CD4-positive, alpha-beta memory T cell (primary cell): ENCODE measurements at regions of chr1 and their contacts with region 1.

Region 1: DNA sequence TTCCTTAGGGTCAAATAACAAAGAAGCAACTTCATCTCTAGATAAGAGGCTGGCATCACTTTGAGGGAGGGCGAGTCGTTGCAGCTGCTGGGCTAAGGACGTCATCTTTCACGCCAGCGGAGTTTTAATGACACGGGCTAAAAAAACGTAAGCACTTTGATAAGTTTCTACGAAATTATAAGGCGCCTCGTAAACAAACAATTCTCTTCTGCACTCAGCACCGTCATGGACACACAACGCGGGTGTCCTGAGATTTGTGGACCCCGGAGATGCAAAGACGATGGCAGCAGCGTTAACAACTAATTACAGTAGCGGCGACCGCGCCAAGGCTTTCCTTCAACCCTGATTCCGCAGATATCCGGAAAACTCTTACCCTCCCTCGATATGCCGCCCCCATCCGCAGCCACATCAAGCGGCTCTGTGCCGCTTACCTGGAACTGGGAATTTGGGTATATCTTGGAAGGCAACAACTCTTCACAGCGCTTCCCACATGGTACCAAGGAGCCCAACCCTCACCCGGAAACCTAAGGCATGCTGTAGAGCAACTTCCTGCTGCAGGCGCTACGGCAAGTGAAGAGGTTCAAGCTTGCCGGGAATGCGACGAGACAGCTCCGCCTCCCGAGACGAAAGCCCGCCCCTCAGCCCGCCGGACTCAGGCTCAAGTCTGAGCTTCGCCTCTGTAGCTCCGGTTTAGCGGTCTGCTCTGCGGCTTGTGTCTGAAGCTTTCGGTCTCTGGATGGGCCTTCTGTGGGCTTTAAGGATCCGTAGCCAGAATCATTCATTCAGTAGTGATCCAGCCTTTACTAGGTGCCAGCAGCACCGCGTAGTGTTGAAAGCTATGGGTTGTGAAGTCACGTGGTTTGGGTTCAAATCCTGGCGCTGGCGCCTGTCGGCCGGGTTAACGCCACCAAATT is at the start of gene HEATR1:
- DNase-seq: peak; percentile 80 to 87 (median 83)
- H3K4me3 ChIP-seq: peak within 1 kb of the TSS; percentile 86 to 99
- H3K4me3 Mint-ChIP-seq: peak within 1 kb of the TSS; percentile 90 to 99 (median 98)
- H3K27ac ChIP-seq: peak within 1 kb of the TSS; percentile 65
- H3K27ac Mint-ChIP-seq: peak within 1 kb of the TSS; percentile 92 to 98 (median 96)
- H3K4me1 ChIP-seq: peaks cover 15% of the 10 kb centered on the region
- H3K4me1 Mint-ChIP-seq: peaks cover 14 to 43% (median 27%) of the 10 kb centered on the region in 4 donors
- H3K27me3 ChIP-seq: peaks cover 4% of the 10 kb centered on the region
- H3K27me3 Mint-ChIP-seq: peaks cover 6 to 7% of the 10 kb centered on the region in 2 donors
- total RNA-seq, gene HEATR1: 44.0 to 57.5 TPM

Region 2: DNA sequence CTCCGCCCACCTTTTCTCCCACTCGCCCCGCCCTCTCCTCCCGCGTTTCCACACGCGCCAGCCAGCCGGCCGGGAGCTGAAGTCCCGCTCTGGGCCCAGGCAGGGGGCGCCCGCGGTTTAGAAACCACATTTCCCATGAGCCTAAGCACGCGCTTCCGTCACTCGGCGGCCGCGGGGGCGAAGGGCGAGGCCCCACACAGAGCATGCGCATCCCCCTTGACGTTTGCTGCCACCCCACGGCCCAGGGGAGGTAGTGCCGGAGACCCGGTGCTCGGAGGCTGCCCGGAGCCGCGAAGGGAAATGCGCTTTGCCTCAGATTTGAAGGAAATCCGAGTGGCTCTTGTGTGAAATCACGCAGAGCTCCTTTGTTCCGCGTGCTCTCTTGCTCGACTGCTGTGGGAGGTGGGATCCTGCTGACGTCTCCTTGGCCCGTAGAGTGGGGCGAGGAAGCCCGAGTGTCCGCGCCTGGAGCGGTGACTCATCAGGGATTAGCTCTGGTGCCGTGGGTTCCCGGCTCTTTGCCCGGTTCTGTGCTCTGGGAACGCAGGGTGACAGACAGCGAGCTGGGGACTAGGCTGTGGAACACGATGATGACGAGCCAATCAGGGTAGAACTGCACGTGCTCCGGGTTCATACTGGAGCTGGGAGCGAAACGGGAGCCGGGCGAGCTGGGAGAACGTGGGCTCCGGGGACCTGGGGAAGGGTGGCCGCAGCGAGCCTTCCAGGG is 1099.6 kb before region 1 on chr1:
- CTCF ChIA-PET with region 1: no interaction called
- POLR2A ChIA-PET with region 1: no interaction called
- intact Hi-C with region 1: loop called (anchors 1 kb)
- DNase-seq: peak; percentile 97 to 99 (median 98)
- H3K4me3 ChIP-seq: peak overlapping the region; percentile 74
- H3K4me3 Mint-ChIP-seq: peak overlapping the region; percentile 92 to 98 (median 96)
- H3K27ac ChIP-seq: peak overlapping the region; percentile 85
- H3K27ac Mint-ChIP-seq: peak overlapping the region; percentile 97 to 100 (median 98)
- H3K4me1 ChIP-seq: peaks cover 20% of the 10 kb centered on the region
- H3K4me1 Mint-ChIP-seq: peaks cover 12 to 32% (median 19%) of the 10 kb centered on the region in 4 donors
- H3K27me3 ChIP-seq: no peaks in the 10 kb centered on the region
- H3K27me3 Mint-ChIP-seq: peaks cover 0 to 1% of the 10 kb centered on the region in 2 donors

Region 3: DNA sequence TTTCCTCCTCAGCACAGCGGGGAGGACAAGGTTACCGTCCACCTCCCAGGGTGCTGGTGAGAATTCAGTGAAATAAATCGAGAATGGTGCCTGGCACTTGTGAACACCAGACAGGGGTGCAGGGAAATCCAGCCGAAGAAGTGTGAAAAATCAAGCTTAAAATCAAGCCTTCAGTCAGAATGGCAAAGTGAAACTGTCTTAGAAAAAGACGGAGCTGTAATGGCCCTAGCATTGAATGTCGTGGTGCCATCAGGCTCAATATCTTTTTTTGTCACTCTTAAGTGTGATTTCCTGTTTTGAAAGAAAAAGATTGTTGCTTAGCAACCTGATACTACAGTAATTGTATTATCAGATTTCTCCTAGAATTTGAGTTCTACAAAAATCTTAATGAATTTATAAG is 188.1 kb before region 1 on chr1:
- CTCF ChIA-PET with region 1: no interaction called
- POLR2A ChIA-PET with region 1: no interaction called
- intact Hi-C with region 1: loop called (anchors 10 kb)
- DNase-seq: peak; percentile 73 to 86 (median 82)
- H3K4me3 ChIP-seq: peak overlapping the region; percentile 45 to 49
- H3K4me3 Mint-ChIP-seq: peak overlapping the region; percentile 63 to 89 (median 80)
- H3K27ac ChIP-seq: peak overlapping the region; percentile 83
- H3K27ac Mint-ChIP-seq: peak overlapping the region; percentile 88 to 99 (median 97)
- H3K4me1 ChIP-seq: peaks cover 25% of the 10 kb centered on the region
- H3K4me1 Mint-ChIP-seq: peaks cover 18 to 27% (median 25%) of the 10 kb centered on the region in 4 donors
- H3K27me3 ChIP-seq: no peaks in the 10 kb centered on the region
- H3K27me3 Mint-ChIP-seq: no peaks in the 10 kb centered on the region

Region 4: GRCh38 chr1:236685917-236686814 is 81.9 kb after region 1 on chr1 and contains the start of gene ACTN2:
- CTCF ChIA-PET with region 1: no interaction called
- POLR2A ChIA-PET with region 1: no interaction called
- intact Hi-C with region 1: loop called (anchors 1 kb)
- DNase-seq: peak; percentile 28 to 43 (median 36)
- H3K4me3 ChIP-seq: peak within 1 kb of the TSS; percentile 11 to 38
- H3K4me3 Mint-ChIP-seq: peak within 1 kb of the TSS; percentile 71 to 88 (median 80)
- H3K27ac ChIP-seq: no peak within 1 kb of the TSS
- H3K27ac Mint-ChIP-seq: peak within 1 kb of the TSS in 6 of 7 donors; percentile 12 to 90 (median 42)
- H3K4me1 ChIP-seq: peaks cover 11% of the 10 kb centered on the region
- H3K4me1 Mint-ChIP-seq: peaks cover 13 to 23% (median 18%) of the 10 kb centered on the region in 4 donors
- H3K27me3 ChIP-seq: peaks cover 5% of the 10 kb centered on the region
- H3K27me3 Mint-ChIP-seq: peaks cover 11 to 16% of the 10 kb centered on the region in 2 donors
- total RNA-seq, gene ACTN2: not detected

Region 5: GRCh38 chr1:237341391-237341790 is 737.1 kb after region 1 on chr1:
- CTCF ChIA-PET with region 1: no interaction called
- POLR2A ChIA-PET with region 1: no interaction called
- intact Hi-C with region 1: no loop called
- DNase-seq: no peak
- H3K4me3 ChIP-seq: no peak overlapping the region
- H3K4me3 Mint-ChIP-seq: no peak overlapping the region
- H3K27ac ChIP-seq: no peak overlapping the region
- H3K27ac Mint-ChIP-seq: no peak overlapping the region
- H3K4me1 ChIP-seq: no peaks in the 10 kb centered on the region
- H3K4me1 Mint-ChIP-seq: no peaks in the 10 kb centered on the region
- H3K27me3 ChIP-seq: no peaks in the 10 kb centered on the region
- H3K27me3 Mint-ChIP-seq: peaks cover 5 to 7% of the 10 kb centered on the region in 2 donors

Region 6: GRCh38 chr1:237562242-237562823 is 958.1 kb after region 1 on chr1:
- CTCF ChIA-PET with region 1: no interaction called
- POLR2A ChIA-PET with region 1: no interaction called
- intact Hi-C with region 1: loop called (anchors 10 kb)
- DNase-seq: peak in 4 of 5 donors; percentile 32 to 46 (median 39)
- H3K4me3 ChIP-seq: no peak overlapping the region
- H3K4me3 Mint-ChIP-seq: no peak overlapping the region
- H3K27ac ChIP-seq: no peak overlapping the region
- H3K27ac Mint-ChIP-seq: no peak overlapping the region
- H3K4me1 ChIP-seq: no peaks in the 10 kb centered on the region
- H3K4me1 Mint-ChIP-seq: peaks cover 0 to 3% (median 0%) of the 10 kb centered on the region in 4 donors
- H3K27me3 ChIP-seq: no peaks in the 10 kb centered on the region
- H3K27me3 Mint-ChIP-seq: peaks cover 0 to 2% of the 10 kb centered on the region in 2 donors